Activated T-helper 1 cell treated with anti-CD3 and anti-CD28 coated beads, Interleukin-12 subunit alpha, Interleukin-12 subunit beta, Interleukin-2, Interleukin-4 antibody, amounts not matched to agents 30 ng/mL and 10 ng/mL and 1 ng/mL, durations not matched to agents 14 hours and 24 hours and 36 hours (primary cell): ENCODE measurements at regions of chr16 and their contacts with region 1.

Region 1: GRCh38 chr16:67521095-67521804 is 7.4 kb upstream of the RIPOR1 start:
- DNase-seq: peak; percentile 95
- H3K4me3 Mint-ChIP-seq: peak overlapping the region; percentile 88
- H3K27ac Mint-ChIP-seq: peak overlapping the region; percentile 98
- H3K4me1 Mint-ChIP-seq: peaks cover 15% of the 10 kb centered on the region
- H3K27me3 Mint-ChIP-seq: peaks cover 8% of the 10 kb centered on the region

Region 2: DNA sequence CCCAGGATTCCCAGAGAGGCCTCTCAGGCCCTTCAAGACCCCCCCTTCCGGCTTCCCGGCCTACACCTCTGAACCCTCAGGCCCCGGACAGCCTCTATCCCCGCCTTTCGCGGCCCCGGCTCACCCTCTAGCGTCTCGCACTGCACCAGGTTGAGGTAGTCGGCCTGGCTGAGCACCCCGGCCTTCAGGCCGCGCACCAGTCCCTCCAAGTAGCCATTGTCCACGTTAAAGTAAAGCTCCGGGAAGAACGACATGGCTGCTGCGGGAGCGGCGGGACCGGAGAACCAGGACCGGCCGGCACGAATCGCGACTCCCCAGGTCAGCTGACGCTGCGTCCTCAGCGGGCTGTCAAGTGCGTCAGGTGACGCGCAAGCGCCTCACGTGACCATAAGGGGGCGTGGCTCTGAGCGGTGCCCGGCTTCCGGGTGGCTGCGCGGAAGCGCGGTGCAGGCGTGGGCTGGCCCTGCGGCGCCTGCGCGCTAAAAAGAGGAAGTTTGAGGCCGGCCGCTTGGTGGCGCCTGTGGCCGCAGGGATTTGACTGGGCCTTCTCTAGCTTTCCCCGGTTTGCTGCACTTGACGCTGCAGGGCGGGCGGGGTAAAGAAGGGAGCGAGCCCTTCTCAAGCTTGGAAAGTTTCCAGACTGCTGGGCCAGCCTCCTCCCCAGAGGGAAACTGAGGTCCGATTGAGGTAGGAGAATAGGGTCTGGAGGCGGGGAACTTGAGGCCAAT is 40.3 kb before region 1 on chr16 and contains the start of gene ATP6V0D1:
- intact Hi-C with region 1: loop called (anchors 1 kb)
- DNase-seq: peak; percentile 99
- H3K4me3 Mint-ChIP-seq: peak within 1 kb of the TSS; percentile 89
- H3K27ac Mint-ChIP-seq: peak within 1 kb of the TSS; percentile 97
- H3K4me1 Mint-ChIP-seq: peaks cover 17% of the 10 kb centered on the region
- H3K27me3 Mint-ChIP-seq: no peaks in the 10 kb centered on the region
- total RNA-seq, gene ATP6V0D1: 37.7 and 41.5 TPM in 2 replicates

Region 3: DNA sequence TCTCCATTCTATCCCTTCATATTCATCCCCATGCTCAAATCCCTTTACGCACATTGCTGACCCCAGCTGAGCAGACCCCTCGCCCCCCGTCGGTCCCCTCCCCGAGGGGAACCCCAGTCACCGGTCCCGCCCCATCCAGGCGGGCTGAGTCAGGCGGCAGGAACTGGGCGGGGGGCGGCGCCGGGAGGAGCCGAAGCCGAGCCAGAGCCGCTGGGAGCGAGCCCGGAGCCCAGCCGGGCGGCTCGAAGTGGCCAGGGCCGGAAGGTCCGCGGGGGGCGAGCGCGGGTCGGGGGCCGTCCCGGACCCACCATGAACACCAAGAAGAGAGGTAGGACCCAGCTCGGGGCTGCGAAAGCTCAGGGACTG is 16.0 kb after region 1 on chr16:
- intact Hi-C with region 1: loop called (anchors 1 kb)
- DNase-seq: peak; percentile 52
- H3K4me3 Mint-ChIP-seq: peak overlapping the region; percentile 83
- H3K27ac Mint-ChIP-seq: peak overlapping the region; percentile 49
- H3K4me1 Mint-ChIP-seq: peaks cover 36% of the 10 kb centered on the region
- H3K27me3 Mint-ChIP-seq: peaks cover 19% of the 10 kb centered on the region

Region 4: GRCh38 chr16:67561824-67562525 is 40.7 kb after region 1 on chr16:
- intact Hi-C with region 1: loop called (anchors 1 kb)
- DNase-seq: peak; percentile 98
- H3K4me3 Mint-ChIP-seq: peak overlapping the region; percentile 88
- H3K27ac Mint-ChIP-seq: peak overlapping the region; percentile 94
- H3K4me1 Mint-ChIP-seq: peaks cover 40% of the 10 kb centered on the region
- H3K27me3 Mint-ChIP-seq: no peaks in the 10 kb centered on the region

Region 5: GRCh38 chr16:67579686-67580085 is 58.4 kb after region 1 on chr16:
- intact Hi-C with region 1: no loop called
- DNase-seq: no peak
- H3K4me3 Mint-ChIP-seq: no peak overlapping the region
- H3K27ac Mint-ChIP-seq: no peak overlapping the region
- H3K4me1 Mint-ChIP-seq: peaks cover 6% of the 10 kb centered on the region
- H3K27me3 Mint-ChIP-seq: no peaks in the 10 kb centered on the region

Region 6: DNA sequence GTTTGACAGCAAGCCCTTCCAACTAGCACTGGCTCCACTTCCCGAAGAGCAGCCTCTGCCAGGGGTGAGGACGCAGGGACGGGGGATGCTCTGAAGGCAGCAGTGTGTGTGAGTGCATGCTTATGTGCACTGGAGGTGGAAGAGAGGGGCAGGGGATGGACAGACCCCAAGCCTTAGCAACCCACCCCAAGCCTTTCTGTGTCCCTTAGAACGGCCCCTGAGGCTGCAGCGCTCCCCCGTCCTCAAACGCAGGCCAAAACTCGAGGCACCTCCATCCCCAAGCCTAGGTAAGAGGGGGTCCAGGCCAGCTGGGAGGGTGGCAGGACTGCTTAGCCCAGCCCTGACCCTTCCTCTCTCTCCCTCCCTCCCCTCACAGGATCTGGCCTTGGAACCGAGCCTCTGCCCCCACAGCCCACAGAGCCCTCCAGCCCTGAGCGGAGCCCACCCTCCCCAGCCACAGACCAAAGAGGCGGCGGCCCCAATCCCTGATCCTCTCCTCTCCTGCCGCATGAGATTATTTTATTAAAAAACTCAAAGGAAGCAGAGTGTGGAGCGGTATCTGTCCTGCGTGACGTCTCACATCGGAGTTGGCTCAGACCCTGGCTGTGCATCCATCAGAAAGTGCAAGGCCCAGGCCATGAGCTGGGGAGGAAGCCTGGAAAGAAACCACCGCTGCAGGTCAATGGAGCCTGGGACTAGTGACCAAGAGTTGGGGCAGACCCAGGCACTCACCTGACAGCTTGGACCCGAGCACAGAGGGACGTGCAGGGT is 136.0 kb after region 1 on chr16:
- intact Hi-C with region 1: no loop called
- DNase-seq: no peak
- H3K4me3 Mint-ChIP-seq: peak overlapping the region; percentile 30
- H3K27ac Mint-ChIP-seq: no peak overlapping the region
- H3K4me1 Mint-ChIP-seq: peaks cover 15% of the 10 kb centered on the region
- H3K27me3 Mint-ChIP-seq: no peaks in the 10 kb centered on the region

Region 7: DNA sequence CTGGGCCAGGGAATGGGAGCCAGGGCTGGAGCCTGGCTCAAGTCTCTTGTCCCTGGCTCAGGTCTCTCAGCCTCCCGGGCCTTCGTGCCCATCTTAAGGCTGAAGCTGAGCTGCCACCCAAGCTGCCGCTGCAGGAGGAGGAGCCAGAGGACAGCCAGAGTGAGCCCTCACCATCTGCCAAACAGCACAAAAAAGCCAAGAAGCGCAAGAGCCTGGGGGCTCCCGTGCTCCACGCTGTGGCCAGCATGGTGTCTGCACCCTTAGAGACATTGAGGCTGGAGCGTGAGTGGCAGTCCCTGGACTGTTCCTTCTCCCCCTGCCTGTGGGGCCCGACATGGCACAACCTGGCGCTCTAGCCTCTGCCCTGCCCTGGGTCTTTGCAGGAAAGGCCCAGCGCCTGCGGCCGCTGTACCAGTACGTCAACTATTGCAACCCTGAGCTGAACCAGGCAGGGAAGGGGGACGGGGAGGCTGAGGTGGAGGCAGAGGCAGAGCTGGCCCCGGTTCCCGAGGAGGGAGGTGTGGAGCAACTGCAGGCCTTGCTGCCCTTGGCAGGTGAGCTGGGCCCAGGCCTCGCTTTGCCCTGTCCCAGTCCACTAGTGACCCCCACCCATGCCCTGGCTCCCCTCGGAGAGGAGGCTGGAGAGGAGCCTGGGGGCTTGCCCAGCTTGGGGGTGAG is 146.7 kb after region 1 on chr16:
- intact Hi-C with region 1: loop called (anchors 1 kb)
- DNase-seq: peak; percentile 76
- H3K4me3 Mint-ChIP-seq: peak overlapping the region; percentile 83
- H3K27ac Mint-ChIP-seq: no peak overlapping the region
- H3K4me1 Mint-ChIP-seq: peaks cover 5% of the 10 kb centered on the region
- H3K27me3 Mint-ChIP-seq: no peaks in the 10 kb centered on the region

Region 8: GRCh38 chr16:67806428-67807147 is 285.3 kb after region 1 on chr16 and contains the starts of genes RANBP10 and TSNAXIP1:
- intact Hi-C with region 1: loop called (anchors 10 kb)
- DNase-seq: peak; percentile 96
- H3K4me3 Mint-ChIP-seq: peak within 1 kb of the TSS; percentile 90
- H3K27ac Mint-ChIP-seq: peak within 1 kb of the TSS; percentile 86
- H3K4me1 Mint-ChIP-seq: peaks cover 35% of the 10 kb centered on the region
- H3K27me3 Mint-ChIP-seq: peaks cover 3% of the 10 kb centered on the region
- total RNA-seq, gene RANBP10: 23.0 and 25.7 TPM in 2 replicates
- total RNA-seq, gene TSNAXIP1: 0.52 and 0.83 TPM in 2 replicates

Region 9: DNA sequence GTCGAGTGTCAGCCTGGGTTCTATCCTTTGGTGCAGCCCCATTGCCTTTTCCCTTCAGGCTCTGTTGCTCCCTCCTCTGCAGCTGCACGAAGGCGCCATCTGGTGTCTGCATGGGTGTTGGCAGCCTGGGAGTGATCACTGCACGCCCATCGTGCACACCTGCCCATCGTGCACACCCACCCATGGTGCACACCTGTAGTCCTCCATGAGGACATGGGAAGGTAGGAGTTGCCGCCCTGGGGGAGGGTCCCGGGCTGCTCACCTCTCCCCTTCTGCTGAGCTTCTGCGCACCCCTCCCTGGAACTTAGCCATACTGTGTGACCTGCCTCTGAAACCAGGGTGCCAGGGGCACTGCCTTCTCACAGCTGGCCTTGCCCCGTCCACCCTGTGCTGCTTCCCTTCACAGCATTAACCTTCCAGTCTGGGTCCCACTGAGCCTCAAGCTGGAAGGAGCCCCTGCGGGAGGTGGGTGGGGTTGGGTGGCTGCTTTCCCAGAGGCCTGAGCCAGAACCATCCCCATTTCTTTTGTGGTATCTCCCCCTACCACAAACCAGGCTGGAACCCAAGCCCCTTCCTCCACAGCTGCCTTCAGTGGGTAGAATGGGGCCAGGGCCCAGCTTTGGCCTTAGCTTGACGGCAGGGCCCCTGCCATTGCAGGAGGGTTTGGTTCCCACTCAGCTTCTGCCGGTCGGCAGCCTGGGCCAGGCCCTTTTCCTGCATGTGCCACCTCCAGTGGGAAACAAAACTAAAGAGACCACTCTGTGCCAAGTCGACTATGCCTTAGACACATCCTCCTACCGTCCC is 407.5 kb after region 1 on chr16:
- intact Hi-C with region 1: loop called (anchors 1 kb)
- DNase-seq: peak; percentile 67
- H3K4me3 Mint-ChIP-seq: no peak overlapping the region
- H3K27ac Mint-ChIP-seq: no peak overlapping the region
- H3K4me1 Mint-ChIP-seq: peaks cover 1% of the 10 kb centered on the region
- H3K27me3 Mint-ChIP-seq: no peaks in the 10 kb centered on the region